ENCODE measurements at regions of chr7 and their contacts with region 1.

Region 1: GRCh38 chr7:2670720-2671391 is 17.1 kb upstream of the AMZ1 start:
- DNase-seq: peak; percentile 78
- ATAC-seq: peak; percentile 91
- H3K4me3 Mint-ChIP-seq: no peak overlapping the region
- H3K27ac Mint-ChIP-seq: no peak overlapping the region
- H3K4me1 Mint-ChIP-seq: peaks cover 11% of the 10 kb centered on the region
- H3K27me3 Mint-ChIP-seq: peaks cover 26% of the 10 kb centered on the region

Region 2: DNA sequence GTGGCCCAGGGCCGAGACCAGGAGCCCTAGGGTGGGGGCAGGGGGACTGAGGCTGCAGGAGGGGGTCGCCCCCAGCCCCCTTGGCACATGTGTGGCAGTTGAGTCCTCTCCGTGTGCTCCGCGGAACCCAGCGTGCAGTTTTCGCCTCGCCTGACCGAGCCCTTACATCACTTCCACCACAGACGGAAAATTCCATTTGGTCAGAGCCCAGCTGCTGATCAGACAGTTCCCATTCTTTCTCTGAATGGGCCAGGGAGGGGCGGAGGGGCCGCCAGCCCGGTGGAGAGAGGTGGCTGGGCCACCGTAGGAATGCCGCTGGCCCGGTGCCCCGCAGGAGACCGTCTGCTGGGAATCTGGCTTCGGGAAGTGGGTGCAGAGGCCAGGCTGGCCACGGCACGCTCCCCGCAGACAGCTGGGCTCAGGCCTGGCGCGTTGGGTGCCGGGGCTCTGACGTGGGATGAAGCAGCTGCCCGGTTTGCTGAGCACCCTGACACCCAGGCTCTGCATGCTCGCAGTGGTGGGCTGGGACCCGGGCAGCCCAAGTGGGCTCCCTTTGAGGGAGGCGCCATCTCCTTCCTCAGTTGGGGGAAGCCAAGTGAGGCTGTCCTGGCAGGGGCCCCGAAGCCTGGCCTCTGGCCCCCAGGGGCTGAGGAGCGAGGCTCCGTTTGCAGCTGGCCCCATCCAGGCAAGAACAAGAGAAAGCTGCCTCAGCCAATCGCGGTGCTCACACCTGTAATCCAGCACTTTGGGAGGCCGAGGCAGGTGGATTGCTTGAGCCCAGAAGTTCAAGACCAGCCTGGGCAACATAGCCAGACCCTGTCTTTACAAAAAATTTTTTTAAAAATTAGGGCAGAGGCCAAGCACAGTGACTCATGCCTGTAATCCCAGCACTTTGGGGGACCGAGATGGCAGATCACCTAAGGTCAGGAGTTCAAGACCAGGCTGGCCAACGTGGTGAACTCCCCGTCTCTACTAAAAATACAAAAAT is 29.2 kb before region 1 on chr7:
- CTCF ChIA-PET with region 1: interaction called, 14 read pairs
- POLR2A ChIA-PET with region 1: no interaction called
- DNase-seq: no peak
- ATAC-seq: no peak
- H3K4me3 Mint-ChIP-seq: no peak overlapping the region
- H3K27ac Mint-ChIP-seq: no peak overlapping the region
- H3K4me1 Mint-ChIP-seq: peaks cover 33% of the 10 kb centered on the region
- H3K27me3 Mint-ChIP-seq: no peaks in the 10 kb centered on the region

Region 3: GRCh38 chr7:2698581-2699288 is 27.9 kb after region 1 on chr7:
- CTCF ChIA-PET with region 1: interaction called, 189 read pairs
- POLR2A ChIA-PET with region 1: interaction called, 5 read pairs
- DNase-seq: peak; percentile 94
- ATAC-seq: peak; percentile 96
- H3K4me3 Mint-ChIP-seq: peak overlapping the region; percentile 58
- H3K27ac Mint-ChIP-seq: peak overlapping the region; percentile 88
- H3K4me1 Mint-ChIP-seq: peaks cover 32% of the 10 kb centered on the region
- H3K27me3 Mint-ChIP-seq: peaks cover 23% of the 10 kb centered on the region

Region 4: DNA sequence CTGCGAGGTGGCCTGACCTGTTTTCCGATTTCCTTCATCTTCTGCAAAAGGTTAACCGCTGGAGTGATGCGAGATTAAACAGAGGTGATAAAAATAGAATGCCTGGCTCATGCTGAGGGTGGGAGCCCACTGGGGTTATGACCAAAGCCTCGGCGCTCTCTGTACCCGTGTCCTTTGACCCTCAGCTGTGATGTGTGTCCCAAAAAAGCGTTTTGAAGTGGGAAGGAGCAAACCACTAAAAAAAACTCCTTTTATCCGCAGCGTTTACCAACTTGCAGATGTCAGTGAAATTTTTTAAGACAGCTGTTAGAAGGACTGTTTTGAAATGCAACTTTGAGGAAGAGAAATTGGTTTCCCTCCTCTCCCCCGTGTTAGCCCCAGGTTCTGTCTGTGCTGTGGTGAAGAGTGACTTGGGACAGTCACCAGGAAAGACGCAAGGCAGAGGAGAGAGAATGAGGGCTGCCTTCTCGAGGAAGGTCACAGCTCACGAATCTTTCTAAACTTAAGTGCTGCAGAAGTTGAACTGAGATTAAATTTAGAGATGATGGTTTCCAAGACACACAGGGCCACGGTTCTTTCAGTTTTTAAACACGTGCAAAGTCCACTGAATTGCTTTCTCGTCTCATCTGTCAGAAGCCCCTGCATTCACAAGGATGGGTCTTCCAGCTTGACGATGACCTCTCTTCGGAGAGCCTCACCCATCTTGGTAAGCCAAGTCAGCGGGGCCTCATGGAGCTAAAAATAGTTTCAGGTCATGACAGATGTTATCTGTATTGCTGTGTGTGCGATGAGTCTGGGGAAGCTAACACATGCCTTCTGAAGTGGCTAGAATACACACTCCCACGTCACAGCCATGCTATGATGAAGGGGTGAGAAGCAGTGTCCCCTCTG is 44.7 kb after region 1 on chr7:
- CTCF ChIA-PET with region 1: interaction called, 189 read pairs
- POLR2A ChIA-PET with region 1: interaction called, 15 read pairs
- DNase-seq: peak; percentile 66
- ATAC-seq: peak; percentile 76
- H3K4me3 Mint-ChIP-seq: peak overlapping the region; percentile 47
- H3K27ac Mint-ChIP-seq: peak overlapping the region; percentile 73
- H3K4me1 Mint-ChIP-seq: peaks cover 85% of the 10 kb centered on the region
- H3K27me3 Mint-ChIP-seq: peaks cover 17% of the 10 kb centered on the region